ENCODE measurements at regions of chr3 and their contacts with region 1.

Region 1: DNA sequence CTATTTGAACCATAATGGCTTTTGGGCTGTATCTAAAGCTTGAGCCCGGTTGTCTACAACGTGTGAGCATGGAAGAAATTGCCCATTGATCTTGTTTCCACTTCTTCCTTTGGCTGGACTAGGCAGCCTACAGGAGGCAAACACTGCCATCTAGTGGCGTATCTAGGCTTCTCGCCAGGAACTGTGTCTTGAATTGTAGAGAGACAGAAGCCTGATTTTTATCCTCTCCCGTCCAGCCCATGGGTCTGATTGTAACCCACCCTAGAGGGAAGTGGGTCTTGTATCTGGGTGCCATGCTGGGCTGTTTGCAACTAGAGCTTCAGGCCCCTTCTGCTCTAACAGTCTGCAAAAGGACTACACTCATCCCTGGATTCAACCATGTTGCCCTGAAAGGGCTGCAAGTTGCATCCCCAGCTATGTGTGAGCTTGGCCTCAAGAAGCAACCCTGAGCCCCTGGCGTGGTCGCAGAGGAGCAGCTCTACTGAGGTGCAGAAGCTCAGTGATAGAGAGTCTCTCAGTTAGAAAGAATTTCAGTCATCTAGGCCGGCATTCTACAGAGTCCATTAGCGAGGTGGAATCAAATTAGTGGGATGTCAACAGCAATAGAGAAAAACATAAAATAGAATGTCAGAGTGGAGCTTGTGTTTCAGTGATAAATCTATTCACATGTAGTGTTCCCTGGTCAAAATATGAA is 170.2 kb upstream of the UMPS start:
- DNase-seq: peak; percentile 95
- ATAC-seq: peak; percentile 83
- H3K4me3 ChIP-seq: no peak overlapping the region
- H3K27ac ChIP-seq: no peak overlapping the region
- H3K4me1 ChIP-seq: peaks cover 39% of the 10 kb centered on the region
- H3K27me3 ChIP-seq: peaks cover 7% of the 10 kb centered on the region; the same call in 1 of the 2 replicates
- CTCF ChIP-seq: peak; percentile 98

Region 2: DNA sequence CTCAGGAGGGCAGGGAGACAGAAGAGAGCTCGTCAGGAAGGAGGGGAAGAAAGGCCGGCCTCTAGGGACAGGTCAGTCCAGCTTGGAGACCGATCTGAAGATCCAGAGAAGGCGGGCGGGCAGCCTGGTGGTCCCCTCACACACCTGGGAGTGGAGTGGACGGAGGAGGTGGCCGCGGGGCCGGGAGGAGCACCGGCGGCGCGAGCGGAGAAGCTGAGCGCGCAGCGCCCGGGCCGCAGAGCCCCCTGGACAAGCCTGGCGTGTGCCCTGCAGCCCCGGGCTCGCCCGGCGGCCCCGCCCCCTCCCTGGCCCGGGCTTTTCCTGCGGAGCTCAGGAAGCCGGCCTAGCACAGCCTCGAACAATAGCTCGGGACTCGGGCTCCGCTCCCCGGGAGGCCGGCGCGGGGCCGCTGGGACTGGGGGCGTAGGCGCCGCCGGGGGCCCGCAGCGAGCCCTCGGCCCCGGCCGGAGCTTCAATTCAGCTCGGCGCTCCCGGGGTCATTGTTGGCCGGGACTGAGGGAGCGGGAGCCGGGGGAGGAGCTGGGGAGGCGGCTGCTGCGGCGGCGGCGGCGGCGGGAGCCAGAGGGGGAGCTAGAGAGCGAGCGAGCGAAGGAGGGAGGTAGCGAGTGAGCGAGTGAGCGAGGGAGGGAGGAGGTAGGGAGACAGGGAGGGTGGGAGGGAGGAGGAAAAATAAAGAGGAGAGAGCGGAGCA is 527.2 kb before region 1 on chr3:
- CTCF ChIA-PET with region 1: no interaction called
- POLR2A ChIA-PET with region 1: no interaction called
- intact Hi-C with region 1: loop called (anchors 10 kb)
- DNase-seq: peak; percentile 85
- ATAC-seq: peak; percentile 92
- H3K4me3 ChIP-seq: peak overlapping the region; percentile 75
- H3K27ac ChIP-seq: no peak overlapping the region
- H3K4me1 ChIP-seq: peaks cover 3% of the 10 kb centered on the region; the same call in 1 of the 2 replicates
- H3K27me3 ChIP-seq: peaks cover 54% of the 10 kb centered on the region
- CTCF ChIP-seq: peak; percentile 71

Region 3: DNA sequence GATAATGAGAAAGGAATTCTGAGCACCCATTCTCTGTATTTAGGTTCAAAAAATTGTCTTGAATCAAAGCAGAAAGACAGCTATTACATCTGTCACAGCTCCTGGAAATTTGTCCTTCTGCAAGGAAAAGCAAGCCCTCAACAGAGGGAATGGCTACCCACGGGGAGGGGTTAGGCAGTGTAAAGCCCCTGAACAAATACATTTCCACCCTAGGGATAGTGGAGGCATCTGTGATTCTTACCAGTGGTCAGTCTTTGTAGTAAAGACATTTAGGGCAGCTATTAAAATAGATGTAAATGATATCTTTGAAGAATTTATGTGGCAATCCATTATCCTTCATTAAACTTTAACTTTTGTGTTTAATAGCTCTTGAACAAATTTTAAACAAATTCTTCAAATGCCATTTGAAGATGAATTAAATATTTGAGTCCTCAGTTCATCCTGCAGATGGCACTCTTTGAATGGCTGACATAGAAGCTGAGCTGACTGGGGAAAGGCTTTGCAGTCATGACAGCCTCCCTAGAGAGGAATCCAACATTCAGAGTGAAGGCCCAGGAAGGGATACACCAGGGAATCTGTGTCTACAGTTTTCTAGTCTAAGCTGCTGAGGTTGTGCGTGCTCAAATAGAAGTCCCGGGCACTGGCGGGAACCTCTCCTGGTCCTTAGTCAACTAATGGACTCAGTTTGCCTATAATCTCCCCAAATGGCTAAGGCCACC is 208.4 kb before region 1 on chr3:
- CTCF ChIA-PET with region 1: interaction called, 3 read pairs
- POLR2A ChIA-PET with region 1: no interaction called
- intact Hi-C with region 1: loop called (anchors 2 kb)
- DNase-seq: peak; percentile 84
- ATAC-seq: peak; percentile 91
- H3K4me3 ChIP-seq: no peak overlapping the region
- H3K27ac ChIP-seq: no peak overlapping the region
- H3K4me1 ChIP-seq: no peaks in the 10 kb centered on the region
- H3K27me3 ChIP-seq: peaks cover 9% of the 10 kb centered on the region; the same call in 1 of the 2 replicates
- CTCF ChIP-seq: peak; percentile 95

Region 4: DNA sequence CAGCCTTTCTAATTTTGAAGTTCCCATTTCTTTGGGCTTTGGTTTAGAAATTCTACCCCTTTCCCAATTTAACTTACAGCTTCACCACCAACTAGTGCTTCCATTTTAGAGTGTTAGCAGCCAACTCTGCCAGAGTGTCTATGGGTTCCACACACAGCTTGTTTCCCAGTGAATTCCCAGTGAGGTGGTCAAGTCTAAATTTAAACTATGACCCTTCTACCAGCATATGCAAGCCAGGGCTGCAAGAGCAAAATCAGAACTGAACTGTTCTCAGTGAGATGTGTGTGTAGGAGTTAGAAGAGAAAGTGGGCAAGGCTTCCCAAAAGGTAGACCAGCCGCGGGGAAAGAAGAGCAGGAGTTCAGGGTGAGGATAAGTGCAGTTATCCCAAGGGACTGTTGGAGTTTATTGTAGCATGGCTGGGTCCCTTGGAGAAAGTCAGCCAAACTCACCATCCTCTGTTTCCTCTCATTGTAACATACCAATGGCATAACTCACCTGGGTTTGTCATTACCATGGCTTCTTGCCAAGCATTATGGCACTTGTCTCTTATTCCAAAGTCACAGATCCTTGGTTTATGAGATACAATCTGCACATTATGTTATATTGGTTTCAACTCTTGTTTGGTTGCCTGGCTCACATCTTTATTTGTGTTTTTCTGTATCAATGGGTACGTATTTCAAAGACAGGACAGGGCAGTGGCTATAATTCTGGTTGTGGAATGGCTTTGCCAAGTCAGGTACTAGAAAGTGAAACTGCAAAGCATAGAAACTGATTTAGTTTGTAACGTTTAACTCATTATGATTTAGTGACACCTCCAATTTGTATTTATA is 40.0 kb after region 1 on chr3:
- CTCF ChIA-PET with region 1: interaction called, 5 read pairs
- POLR2A ChIA-PET with region 1: no interaction called
- intact Hi-C with region 1: loop called (anchors 2 kb)
- DNase-seq: peak; percentile 99
- ATAC-seq: peak; percentile 90
- H3K4me3 ChIP-seq: 0 out of 2 replicates have a peak overlapping the region, but pooled peaks have one; percentile 4
- H3K27ac ChIP-seq: peak overlapping the region; percentile 84
- H3K4me1 ChIP-seq: peaks cover 34% of the 10 kb centered on the region
- H3K27me3 ChIP-seq: no peaks in the 10 kb centered on the region
- CTCF ChIP-seq: no peak

Region 5: GRCh38 chr3:124669470-124669869 is 109.4 kb after region 1 on chr3:
- CTCF ChIA-PET with region 1: no interaction called
- POLR2A ChIA-PET with region 1: no interaction called
- intact Hi-C with region 1: no loop called
- DNase-seq: peak; percentile 81
- ATAC-seq: peak; percentile 100
- H3K4me3 ChIP-seq: no peak overlapping the region
- H3K27ac ChIP-seq: peak overlapping the region; percentile 34
- H3K4me1 ChIP-seq: peaks cover 13% of the 10 kb centered on the region
- H3K27me3 ChIP-seq: no peaks in the 10 kb centered on the region
- CTCF ChIP-seq: no peak

Region 6: DNA sequence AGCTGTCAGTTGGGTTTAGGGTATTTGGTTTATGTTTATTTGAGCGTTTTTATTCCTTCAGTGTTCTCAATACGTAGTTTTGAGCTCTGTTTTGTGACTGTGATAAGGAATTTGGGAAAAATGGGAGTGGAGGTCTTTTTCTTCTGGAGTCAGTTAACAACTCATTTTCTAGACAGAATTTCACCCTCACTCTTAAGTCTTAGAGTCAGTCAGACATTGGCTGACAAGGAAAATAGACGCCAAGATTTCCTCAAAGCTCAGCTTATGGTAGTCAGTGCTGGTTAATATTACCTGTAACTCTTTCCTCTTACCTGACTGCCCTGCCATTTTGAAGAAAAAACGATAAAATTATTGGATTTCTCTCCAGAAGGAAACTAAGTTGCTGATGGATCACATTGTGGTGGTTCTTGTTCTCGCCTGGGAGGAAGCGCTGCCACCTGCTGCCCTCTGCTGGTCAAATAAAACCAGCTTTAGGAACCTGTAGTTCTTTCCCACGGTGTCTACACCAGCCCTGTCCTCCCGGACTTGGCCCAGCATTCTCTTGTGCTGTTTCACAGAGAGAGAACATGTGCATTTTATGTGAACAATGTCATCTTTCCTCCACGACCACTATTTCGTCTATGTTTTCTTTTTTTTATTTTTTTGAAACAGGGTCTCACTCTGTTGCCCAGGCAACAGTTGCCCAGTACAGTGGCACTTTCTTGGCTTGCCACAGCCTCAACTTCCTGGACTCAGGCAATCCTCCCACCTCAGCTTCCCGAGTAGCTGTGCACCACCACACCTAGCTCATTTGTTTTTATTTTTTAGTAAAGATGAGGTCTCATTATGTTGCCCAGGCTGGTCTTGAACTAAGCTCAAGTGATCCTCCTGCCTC is 128.8 kb after region 1 on chr3:
- CTCF ChIA-PET with region 1: interaction called, 5 read pairs
- POLR2A ChIA-PET with region 1: no interaction called
- intact Hi-C with region 1: loop called (anchors 1 kb)
- DNase-seq: peak; percentile 80
- ATAC-seq: peak; percentile 94
- H3K4me3 ChIP-seq: no peak overlapping the region
- H3K27ac ChIP-seq: no peak overlapping the region
- H3K4me1 ChIP-seq: peaks cover 14% of the 10 kb centered on the region
- H3K27me3 ChIP-seq: no peaks in the 10 kb centered on the region
- CTCF ChIP-seq: peak; percentile 82

Measured in PC-3 (cell line).